GM12878 (cell line): ENCODE measurements at regions of chrX and their contacts with region 1.

Region 1: GRCh38 chrX:131830400-131831184 is 192.5 kb upstream of the STK26 start:
- DNase-seq: peak; percentile 69
- ATAC-seq: peak; percentile 88
- H3K4me3 ChIP-seq: peak overlapping the region; percentile 62
- H3K27ac ChIP-seq: peak overlapping the region; percentile 48
- H3K4me1 ChIP-seq: peaks cover 4% of the 10 kb centered on the region; the same call in 1 of the 2 replicates
- H3K27me3 ChIP-seq: no peaks in the 10 kb centered on the region
- CTCF ChIP-seq: peak; percentile 28 to 57 (median 42); a peak in 4 of 6 replicates
- EP300 ChIP-seq: no peak
- POLR2A ChIP-seq: peak; percentile 67
- RAD21 ChIP-seq: peak; percentile 70

Region 2: DNA sequence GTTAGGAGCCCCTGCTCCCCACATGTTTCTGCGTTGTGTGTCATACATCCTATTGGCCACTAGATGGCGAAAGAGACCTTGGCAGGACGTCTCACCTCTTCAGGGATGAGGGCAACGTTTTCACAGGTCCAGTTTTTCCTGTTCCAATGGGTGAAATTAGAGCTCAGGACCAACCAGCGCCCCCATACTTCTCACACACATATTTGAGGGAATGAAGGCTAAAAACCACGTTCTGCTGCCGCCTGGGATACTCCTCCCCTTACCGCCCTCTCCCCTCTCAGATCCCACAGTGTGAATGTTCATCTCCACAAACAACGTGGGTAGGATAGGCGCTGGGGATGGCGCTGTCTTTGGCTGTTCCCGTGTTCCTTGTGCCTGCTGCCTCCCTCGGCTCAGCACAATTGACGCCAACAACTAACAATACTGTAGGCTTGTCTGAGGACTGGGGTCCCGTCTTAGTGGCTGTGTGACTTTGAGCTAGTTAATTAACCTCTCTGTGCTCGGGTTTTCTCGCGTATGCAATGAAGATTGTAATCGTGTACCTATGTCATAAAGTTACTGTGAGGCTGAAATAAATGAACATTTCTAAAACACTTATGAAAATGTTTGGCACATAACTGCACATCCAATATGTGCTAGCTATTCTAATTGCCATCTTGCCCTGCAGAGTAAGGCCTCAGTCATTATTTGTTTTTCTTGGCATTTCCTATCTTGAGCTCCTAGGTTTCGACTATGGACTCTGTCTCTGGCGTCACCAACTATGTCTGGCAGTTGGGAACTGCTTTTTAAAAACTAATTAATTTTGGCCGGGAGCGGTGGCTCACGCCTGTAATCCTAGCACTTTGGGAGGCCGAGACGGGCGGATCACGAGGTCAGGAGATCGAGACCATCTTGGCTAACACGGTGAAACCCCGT is 11.2 kb after region 1 on chrX:
- CTCF ChIA-PET with region 1: interaction called, 28 read pairs
- POLR2A ChIA-PET with region 1: interaction called, 3 read pairs
- RAD21 ChIA-PET with region 1: interaction called, 15 read pairs
- SMC1A ChIA-PET with region 1: interaction called, 6 read pairs
- in situ Hi-C with region 1: no loop called
- intact Hi-C with region 1: no loop called
- DNase-seq: no peak
- ATAC-seq: peak; percentile 98
- H3K4me3 ChIP-seq: no peak overlapping the region
- H3K27ac ChIP-seq: no peak overlapping the region
- H3K4me1 ChIP-seq: no peaks in the 10 kb centered on the region
- H3K27me3 ChIP-seq: no peaks in the 10 kb centered on the region
- CTCF ChIP-seq: peak; percentile 85 to 90 (median 88)
- EP300 ChIP-seq: no peak
- POLR2A ChIP-seq: no peak
- RAD21 ChIP-seq: peak; percentile 96

Region 3: GRCh38 chrX:131923611-131924235 is 93.1 kb after region 1 on chrX:
- CTCF ChIA-PET with region 1: no interaction called
- POLR2A ChIA-PET with region 1: no interaction called
- RAD21 ChIA-PET with region 1: no interaction called
- SMC1A ChIA-PET with region 1: no interaction called
- in situ Hi-C with region 1: no loop called
- intact Hi-C with region 1: no loop called
- DNase-seq: no peak
- ATAC-seq: no peak
- H3K4me3 ChIP-seq: no peak overlapping the region
- H3K27ac ChIP-seq: no peak overlapping the region
- H3K4me1 ChIP-seq: no peaks in the 10 kb centered on the region
- H3K27me3 ChIP-seq: no peaks in the 10 kb centered on the region
- CTCF ChIP-seq: no peak
- EP300 ChIP-seq: no peak
- POLR2A ChIP-seq: no peak
- RAD21 ChIP-seq: no peak

Region 4: GRCh38 chrX:132071260-132071659 is 240.7 kb after region 1 on chrX:
- CTCF ChIA-PET with region 1: interaction called, 8 read pairs
- POLR2A ChIA-PET with region 1: no interaction called
- RAD21 ChIA-PET with region 1: interaction called, 14 read pairs
- SMC1A ChIA-PET with region 1: interaction called, 5 read pairs
- in situ Hi-C with region 1: no loop called
- intact Hi-C with region 1: no loop called
- DNase-seq: no peak
- ATAC-seq: peak; percentile 54
- H3K4me3 ChIP-seq: no peak overlapping the region
- H3K27ac ChIP-seq: no peak overlapping the region
- H3K4me1 ChIP-seq: no peaks in the 10 kb centered on the region
- H3K27me3 ChIP-seq: no peaks in the 10 kb centered on the region
- CTCF ChIP-seq: peak in 1 of 3 experiments; percentile 15; a peak in 2 of 6 replicates
- EP300 ChIP-seq: no peak
- POLR2A ChIP-seq: no peak
- RAD21 ChIP-seq: peak; percentile 52

Region 5: GRCh38 chrX:132488819-132489577 is 658.4 kb after region 1 on chrX and contains the start of gene MBNL3:
- CTCF ChIA-PET with region 1: no interaction called
- POLR2A ChIA-PET with region 1: interaction called, 3 read pairs
- RAD21 ChIA-PET with region 1: interaction called, 5 read pairs
- SMC1A ChIA-PET with region 1: interaction called, 3 read pairs
- in situ Hi-C with region 1: no loop called
- intact Hi-C with region 1: loop called (anchors 2 kb)
- DNase-seq: no peak
- ATAC-seq: peak; percentile 79
- H3K4me3 ChIP-seq: peak within 1 kb of the TSS; percentile 72
- H3K27ac ChIP-seq: peak within 1 kb of the TSS; percentile 81
- H3K4me1 ChIP-seq: no peaks in the 10 kb centered on the region
- H3K27me3 ChIP-seq: no peaks in the 10 kb centered on the region
- CTCF ChIP-seq: no peak
- EP300 ChIP-seq: no peak
- POLR2A ChIP-seq: peak; percentile 72
- RAD21 ChIP-seq: no peak
- polyA plus RNA-seq, gene MBNL3: 3.4 to 6.1 TPM

Region 6: DNA sequence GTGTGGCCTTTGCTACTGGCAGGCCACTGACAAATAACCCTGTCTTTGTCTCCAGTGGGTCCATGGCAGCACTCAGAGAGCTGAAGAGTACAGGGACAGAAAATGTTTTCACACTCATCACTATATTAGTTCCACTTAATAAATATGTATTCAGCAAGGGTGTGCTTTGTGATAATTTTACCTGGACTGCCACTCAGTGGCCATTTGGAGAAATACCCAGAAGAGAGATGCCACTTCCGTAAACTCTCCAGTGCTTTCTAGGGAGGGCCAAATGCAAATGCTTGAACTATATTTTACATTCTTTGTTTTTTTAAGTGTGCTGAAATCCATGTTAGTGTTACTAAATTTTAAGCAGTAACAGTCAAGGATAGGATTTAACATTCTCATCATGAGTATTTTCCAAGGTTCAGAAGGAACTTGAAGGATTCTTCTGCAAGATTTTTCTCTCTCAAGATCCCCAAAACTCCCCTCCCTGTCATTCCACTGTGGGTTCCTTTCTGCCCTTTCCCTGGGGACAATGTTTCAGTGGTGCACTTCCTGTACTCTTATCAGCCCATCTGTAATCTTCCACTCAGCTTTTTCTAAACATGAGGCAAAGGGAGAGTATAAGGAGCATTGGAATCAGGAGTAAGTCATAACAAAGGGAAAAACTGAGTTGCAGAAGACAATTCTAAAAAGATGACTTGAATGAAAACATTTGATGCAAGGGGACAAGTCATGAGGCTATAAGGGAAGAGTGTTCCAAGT is 1341.5 kb after region 1 on chrX:
- CTCF ChIA-PET with region 1: no interaction called
- POLR2A ChIA-PET with region 1: no interaction called
- RAD21 ChIA-PET with region 1: no interaction called
- SMC1A ChIA-PET with region 1: no interaction called
- in situ Hi-C with region 1: no loop called
- intact Hi-C with region 1: loop called (anchors 5 kb)
- DNase-seq: no peak
- ATAC-seq: peak; percentile 89
- H3K4me3 ChIP-seq: no peak overlapping the region
- H3K27ac ChIP-seq: no peak overlapping the region
- H3K4me1 ChIP-seq: no peaks in the 10 kb centered on the region
- H3K27me3 ChIP-seq: no peaks in the 10 kb centered on the region
- CTCF ChIP-seq: peak; percentile 37 to 46 (median 41); a peak in 5 of 6 replicates
- EP300 ChIP-seq: no peak
- POLR2A ChIP-seq: no peak
- RAD21 ChIP-seq: peak; percentile 47